ENCODE measurements at regions of chr21 and their contacts with region 1.

Region 1: DNA sequence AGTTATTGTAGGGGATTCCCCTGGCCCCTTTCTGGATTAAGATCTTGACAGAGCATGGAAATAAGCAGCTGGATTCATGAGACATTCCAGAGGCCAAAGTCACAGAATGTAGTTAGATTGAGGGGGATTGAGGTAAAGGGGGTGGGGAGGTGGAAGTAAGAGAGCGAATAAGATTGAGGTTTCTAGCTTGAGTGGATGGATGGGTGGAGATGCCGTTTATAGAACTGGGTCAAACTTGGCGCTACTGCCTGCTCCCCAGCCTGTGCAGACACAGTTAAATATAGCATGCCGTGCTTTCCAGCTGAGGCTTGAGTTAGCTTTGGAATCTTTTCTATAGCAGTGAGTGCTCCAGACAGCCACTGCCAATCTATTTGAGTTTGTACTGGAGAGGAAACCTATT is 85.7 kb downstream of the DYRK1A start:
- DNase-seq: peak in 7 of 10 donors; percentile 27 to 88 (median 54)

Region 2: GRCh38 chr21:37412603-37413360 is 39.4 kb before region 1 on chr21:
- intact Hi-C with region 1: no loop called
- DNase-seq: no peak

Region 3: GRCh38 chr21:37435120-37435519 is 17.1 kb before region 1 on chr21:
- intact Hi-C with region 1: loop called (anchors 2 kb)
- DNase-seq: peak in 7 of 10 donors; percentile 28 to 94 (median 45)

Measured in posterior cingulate gyrus (tissue), 11 donors.